ENCODE measurements at regions of chr1 and their contacts with region 1.

Region 1: GRCh38 chr1:205791568-205792180 is 16.4 kb upstream of the RAB29 start:
- DNase-seq: peak; percentile 36
- H3K4me3 Mint-ChIP-seq: no peak overlapping the region
- H3K27ac Mint-ChIP-seq: no peak overlapping the region
- H3K4me1 Mint-ChIP-seq: peaks cover 11% of the 10 kb centered on the region
- H3K27me3 Mint-ChIP-seq: no peaks in the 10 kb centered on the region

Region 2: GRCh38 chr1:205812878-205813754 is 21.4 kb after region 1 on chr1 and contains the start of gene SLC41A1:
- intact Hi-C with region 1: loop called (anchors 1 kb)
- DNase-seq: peak; percentile 81
- H3K4me3 Mint-ChIP-seq: peak within 1 kb of the TSS; percentile 94
- H3K27ac Mint-ChIP-seq: peak within 1 kb of the TSS; percentile 85
- H3K4me1 Mint-ChIP-seq: peaks cover 49% of the 10 kb centered on the region
- H3K27me3 Mint-ChIP-seq: peaks cover 7% of the 10 kb centered on the region
- total RNA-seq, gene SLC41A1: 33.9 and 34.8 TPM in 2 replicates

Region 3: GRCh38 chr1:205907794-205908193 is 116.1 kb after region 1 on chr1:
- intact Hi-C with region 1: loop called (anchors 1 kb)
- DNase-seq: no peak
- H3K4me3 Mint-ChIP-seq: no peak overlapping the region
- H3K27ac Mint-ChIP-seq: no peak overlapping the region
- H3K4me1 Mint-ChIP-seq: no peaks in the 10 kb centered on the region
- H3K27me3 Mint-ChIP-seq: peaks cover 32% of the 10 kb centered on the region

Region 4: DNA sequence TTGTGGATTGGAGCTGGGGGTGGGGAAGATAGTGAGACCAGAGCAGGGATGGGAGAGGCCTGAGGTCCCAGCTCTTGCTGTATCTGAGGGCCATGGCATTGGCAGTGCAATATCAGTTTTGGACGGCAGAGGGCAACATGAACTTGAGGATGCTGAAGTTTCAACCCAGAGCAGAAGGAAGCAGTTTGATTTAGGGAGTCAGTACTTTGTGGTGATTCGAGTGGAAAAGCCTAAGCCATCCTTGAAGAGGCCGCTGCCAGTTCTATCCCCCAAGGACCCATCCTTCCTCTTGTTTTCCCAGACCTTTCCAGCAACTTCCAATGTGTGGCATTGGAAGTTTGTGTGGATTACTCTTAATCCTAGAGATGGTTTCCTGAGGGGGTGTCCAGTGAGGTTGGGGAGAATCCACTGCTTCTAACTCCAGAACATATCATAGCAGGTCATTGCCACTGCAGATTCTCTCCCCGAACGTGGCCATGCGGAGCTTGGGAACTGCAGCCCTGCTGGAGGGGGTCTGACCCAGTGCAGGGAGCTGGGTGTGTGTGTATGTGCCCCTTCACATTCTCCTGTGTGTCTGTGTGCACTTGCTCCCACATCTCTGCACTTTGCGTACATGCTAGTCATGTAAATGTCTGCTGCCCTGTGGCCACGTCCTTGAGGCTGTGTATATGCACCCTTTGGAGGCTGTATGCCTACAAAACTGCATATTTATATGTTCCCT is 127.5 kb after region 1 on chr1:
- intact Hi-C with region 1: loop called (anchors 1 kb)
- DNase-seq: peak; percentile 56
- H3K4me3 Mint-ChIP-seq: no peak overlapping the region
- H3K27ac Mint-ChIP-seq: no peak overlapping the region
- H3K4me1 Mint-ChIP-seq: no peaks in the 10 kb centered on the region
- H3K27me3 Mint-ChIP-seq: peaks cover 14% of the 10 kb centered on the region

Region 5: GRCh38 chr1:205977402-205978014 is 185.8 kb after region 1 on chr1:
- intact Hi-C with region 1: loop called (anchors 1 kb)
- DNase-seq: peak; percentile 63
- H3K4me3 Mint-ChIP-seq: no peak overlapping the region
- H3K27ac Mint-ChIP-seq: no peak overlapping the region
- H3K4me1 Mint-ChIP-seq: no peaks in the 10 kb centered on the region
- H3K27me3 Mint-ChIP-seq: no peaks in the 10 kb centered on the region